ENCODE measurements at regions of chr18 and their contacts with region 1.

Region 1: DNA sequence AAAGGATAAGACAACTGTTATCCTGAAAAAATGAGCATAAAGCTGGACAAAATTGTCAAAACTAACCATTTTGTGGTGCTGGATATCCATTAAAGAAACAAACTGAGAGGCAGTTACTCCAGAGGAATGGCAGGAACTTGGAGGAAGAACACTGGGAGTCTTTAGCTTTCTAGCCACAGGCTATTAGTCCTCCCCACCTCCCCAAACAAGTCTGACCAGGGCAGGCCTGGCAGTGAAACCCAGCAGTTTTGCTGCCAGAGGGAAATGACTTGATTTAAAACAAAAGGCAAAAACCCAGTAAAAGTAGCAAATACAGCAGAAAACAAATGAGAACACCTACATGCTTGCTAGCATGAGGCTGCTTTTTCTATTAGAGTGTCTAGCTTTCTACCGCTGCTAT is 34.9 kb downstream of the OSBPL1A start:
- DNase-seq: no peak
- H3K4me3 ChIP-seq: no peak overlapping the region
- H3K27ac ChIP-seq: no peak overlapping the region
- H3K4me1 ChIP-seq: peaks cover 0 to 6% (median 0%) of the 10 kb centered on the region in 6 donors
- H3K27me3 ChIP-seq: no peaks in the 10 kb centered on the region
- CTCF ChIP-seq: no peak
- POLR2A ChIP-seq: no peak

Region 2: GRCh38 chr18:24198461-24198860 is 164.3 kb before region 1 on chr18:
- intact Hi-C with region 1: no loop called
- DNase-seq: no peak
- H3K4me3 ChIP-seq: no peak overlapping the region
- H3K27ac ChIP-seq: peak overlapping the region in 3 of 8 donors; percentile 26 to 62 (median 53)
- H3K4me1 ChIP-seq: no peaks in the 10 kb centered on the region
- H3K27me3 ChIP-seq: no peaks in the 10 kb centered on the region
- CTCF ChIP-seq: no peak
- POLR2A ChIP-seq: no peak

Region 3: GRCh38 chr18:24488824-24489493 is 126.2 kb after region 1 on chr18:
- intact Hi-C with region 1: loop called (anchors 5 kb)
- DNase-seq: no peak
- H3K4me3 ChIP-seq: no peak overlapping the region
- H3K27ac ChIP-seq: no peak overlapping the region
- H3K4me1 ChIP-seq: peaks cover 3 to 47% (median 25%) of the 10 kb centered on the region in 6 donors
- H3K27me3 ChIP-seq: no peaks in the 10 kb centered on the region
- CTCF ChIP-seq: peak; percentile 67 to 91 (median 83)
- POLR2A ChIP-seq: no peak

Region 4: DNA sequence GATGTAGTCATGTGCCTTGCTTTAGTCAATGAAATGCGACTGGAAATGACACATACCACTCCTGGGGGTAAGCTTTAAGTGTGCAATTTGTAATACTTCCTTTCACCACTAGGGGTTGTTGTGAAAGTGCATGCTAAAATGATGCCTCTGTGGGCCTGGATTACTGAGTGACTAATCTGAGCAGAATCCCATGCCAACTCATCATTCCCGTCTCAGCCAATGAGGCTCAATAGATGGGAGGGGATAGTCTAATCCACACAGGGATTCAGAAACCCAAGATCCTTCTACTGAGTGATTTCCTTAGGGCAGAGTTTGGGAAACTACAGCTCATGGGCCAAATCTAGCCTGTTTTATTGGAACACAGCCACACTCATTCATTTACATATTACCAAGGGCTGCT is 151.7 kb after region 1 on chr18:
- intact Hi-C with region 1: no loop called
- DNase-seq: no peak
- H3K4me3 ChIP-seq: no peak overlapping the region
- H3K27ac ChIP-seq: no peak overlapping the region
- H3K4me1 ChIP-seq: no peaks in the 10 kb centered on the region
- H3K27me3 ChIP-seq: no peaks in the 10 kb centered on the region
- CTCF ChIP-seq: peak in 7 of 11 experiments; percentile 23 to 60 (median 50)
- POLR2A ChIP-seq: no peak